A673 (cell line): ENCODE measurements at regions of chr6 and their contacts with region 1.

Region 1: GRCh38 chr6:96116663-96117062 is 100.9 kb downstream of the FUT9 start:
- DNase-seq: peak; percentile 32
- H3K4me3 ChIP-seq: no peak overlapping the region
- H3K27ac ChIP-seq: no peak overlapping the region
- H3K4me1 ChIP-seq: no peaks in the 10 kb centered on the region
- H3K27me3 ChIP-seq: no peaks in the 10 kb centered on the region
- CTCF ChIP-seq: no peak

Region 2: DNA sequence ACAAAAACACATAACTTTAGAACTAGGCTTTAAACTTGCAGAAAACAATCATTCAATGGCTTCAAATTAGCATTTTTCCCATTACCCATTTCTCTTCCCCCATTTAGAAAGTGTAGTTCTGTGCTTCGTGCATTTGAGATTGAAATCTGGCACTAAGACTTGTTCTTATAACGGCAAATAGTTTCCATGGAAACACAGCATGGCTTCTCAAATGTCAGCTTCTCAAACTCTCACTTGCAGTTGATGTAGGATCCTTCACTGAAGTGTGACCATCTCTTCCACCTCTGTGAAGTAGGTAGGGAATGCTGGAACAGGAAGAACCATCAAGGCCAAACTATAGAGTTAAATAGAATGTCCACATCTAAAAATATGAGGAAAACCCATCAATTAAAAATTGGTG is 487.1 kb before region 1 on chr6:
- CTCF ChIA-PET with region 1: no interaction called
- POLR2A ChIA-PET with region 1: no interaction called
- intact Hi-C with region 1: no loop called
- DNase-seq: peak; percentile 3
- H3K4me3 ChIP-seq: no peak overlapping the region
- H3K27ac ChIP-seq: no peak overlapping the region
- H3K4me1 ChIP-seq: no peaks in the 10 kb centered on the region
- H3K27me3 ChIP-seq: no peaks in the 10 kb centered on the region
- CTCF ChIP-seq: no peak

Region 3: GRCh38 chr6:95923518-95923917 is 193.1 kb before region 1 on chr6:
- CTCF ChIA-PET with region 1: interaction called, 10 read pairs
- POLR2A ChIA-PET with region 1: no interaction called
- intact Hi-C with region 1: no loop called
- DNase-seq: peak; percentile 52
- H3K4me3 ChIP-seq: no peak overlapping the region
- H3K27ac ChIP-seq: no peak overlapping the region
- H3K4me1 ChIP-seq: no peaks in the 10 kb centered on the region
- H3K27me3 ChIP-seq: no peaks in the 10 kb centered on the region
- CTCF ChIP-seq: peak; percentile 62

Region 4: DNA sequence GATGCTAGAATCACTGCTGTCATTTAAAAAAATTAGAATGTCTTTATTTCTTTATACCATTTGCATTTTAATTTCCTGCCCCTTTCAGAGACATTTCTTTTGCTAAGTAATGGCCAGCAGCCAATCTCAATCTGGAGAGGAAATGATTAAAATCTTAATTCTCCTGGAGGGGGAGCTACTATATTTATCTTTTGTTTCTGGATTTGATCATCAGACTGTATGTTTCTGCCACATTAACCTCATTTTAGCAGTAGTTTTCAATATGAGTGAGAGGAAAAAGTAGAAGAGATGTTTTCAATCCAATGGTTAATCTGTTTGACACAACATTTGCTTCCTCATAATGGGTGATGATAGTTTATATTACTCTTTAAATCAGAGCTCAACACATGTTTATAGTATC is 37.1 kb after region 1 on chr6:
- CTCF ChIA-PET with region 1: no interaction called
- POLR2A ChIA-PET with region 1: no interaction called
- intact Hi-C with region 1: no loop called
- DNase-seq: peak; percentile 70
- H3K4me3 ChIP-seq: no peak overlapping the region
- H3K27ac ChIP-seq: peak overlapping the region; percentile 5
- H3K4me1 ChIP-seq: peaks cover 27% of the 10 kb centered on the region
- H3K27me3 ChIP-seq: no peaks in the 10 kb centered on the region
- CTCF ChIP-seq: peak; percentile 36; the same call in 1 of the 2 replicates

Region 5: GRCh38 chr6:97246842-97247241 is 1130.2 kb after region 1 on chr6:
- CTCF ChIA-PET with region 1: no interaction called
- POLR2A ChIA-PET with region 1: no interaction called
- intact Hi-C with region 1: no loop called
- DNase-seq: no peak
- H3K4me3 ChIP-seq: no peak overlapping the region
- H3K27ac ChIP-seq: no peak overlapping the region
- H3K4me1 ChIP-seq: no peaks in the 10 kb centered on the region
- H3K27me3 ChIP-seq: no peaks in the 10 kb centered on the region
- CTCF ChIP-seq: no peak